H1 (cell line): ENCODE measurements at regions of chr1 and their contacts with region 1.

Region 1: GRCh38 chr1:114075546-114076242 is 78.0 kb downstream of the SYT6 start:
- DNase-seq: peak in 1 of 2 experiments; percentile 29
- H3K4me3 ChIP-seq: peak overlapping the region in 1 of 4 experiments; percentile 13; a peak in 1 of 8 replicates
- H3K27ac ChIP-seq: peak overlapping the region; percentile 63; the same call in 1 of the 2 replicates
- H3K4me1 ChIP-seq: peaks cover 17 to 42% (median 32%) of the 10 kb centered on the region in 4 experiments
- H3K27me3 ChIP-seq: no peaks in the 10 kb centered on the region
- CTCF ChIP-seq: no peak
- EP300 ChIP-seq: no peak
- POLR2A ChIP-seq: no peak
- RAD21 ChIP-seq: no peak

Region 2: GRCh38 chr1:114062477-114063099 is 13.1 kb before region 1 on chr1:
- CTCF ChIA-PET with region 1: interaction called, 10 read pairs
- POLR2A ChIA-PET with region 1: interaction called, 4 read pairs
- DNase-seq: no peak
- H3K4me3 ChIP-seq: no peak overlapping the region
- H3K27ac ChIP-seq: no peak overlapping the region
- H3K4me1 ChIP-seq: no peaks in the 10 kb centered on the region
- H3K27me3 ChIP-seq: no peaks in the 10 kb centered on the region; a peak in 1 of 7 replicates
- CTCF ChIP-seq: no peak
- EP300 ChIP-seq: no peak
- POLR2A ChIP-seq: no peak
- RAD21 ChIP-seq: no peak

Region 3: DNA sequence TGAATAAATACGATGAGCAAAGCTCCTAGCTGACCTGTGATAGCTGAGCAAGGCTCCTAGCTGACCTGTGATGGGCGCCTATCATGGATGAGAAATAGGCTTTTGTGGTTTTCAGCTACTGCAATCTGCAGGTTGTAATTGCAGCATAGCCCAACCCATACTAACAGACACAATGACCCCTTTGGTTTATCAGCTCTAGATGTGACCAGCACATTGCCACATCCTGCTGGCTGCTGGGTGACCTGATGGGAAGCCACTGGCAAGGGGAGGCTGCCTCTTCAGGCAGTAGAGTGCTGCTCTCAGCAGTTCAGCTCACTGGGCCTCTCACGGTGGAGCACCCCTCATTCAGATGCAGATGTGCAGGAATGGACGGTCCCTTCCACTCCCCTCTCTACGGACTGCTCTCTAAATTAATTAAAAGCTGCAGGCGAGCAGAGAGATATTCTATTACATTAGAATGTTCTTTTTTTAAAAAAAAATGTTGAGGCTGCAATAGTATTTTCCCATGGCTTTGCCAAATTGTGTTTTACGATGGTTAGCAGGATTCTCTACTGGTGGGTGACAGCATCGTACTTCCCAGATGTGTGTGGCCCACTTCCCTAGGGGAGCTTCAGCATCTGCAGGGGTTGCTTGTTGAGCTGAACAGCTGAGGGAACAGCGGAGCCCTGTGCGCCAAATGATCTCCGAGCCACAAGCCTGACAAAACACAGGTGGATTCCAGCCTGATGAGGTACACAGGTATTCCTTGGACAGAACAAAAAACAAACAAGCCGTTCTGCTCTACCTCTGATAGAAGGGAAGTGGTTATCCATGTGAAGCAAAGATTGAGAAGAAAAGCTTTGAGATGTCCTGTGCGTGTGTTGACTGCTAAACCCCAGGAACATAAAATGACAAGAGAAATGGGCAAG is 13.0 kb after region 1 on chr1:
- CTCF ChIA-PET with region 1: interaction called, 11 read pairs
- POLR2A ChIA-PET with region 1: interaction called, 8 read pairs
- DNase-seq: no peak
- H3K4me3 ChIP-seq: no peak overlapping the region
- H3K27ac ChIP-seq: 0 out of 2 replicates have a peak overlapping the region, but pooled peaks have one; percentile 17
- H3K4me1 ChIP-seq: peaks cover 7 to 23% (median 11%) of the 10 kb centered on the region in 4 experiments; a peak in 6 of 7 replicates
- H3K27me3 ChIP-seq: no peaks in the 10 kb centered on the region
- CTCF ChIP-seq: peak in 2 of 3 experiments; percentile 1 to 12; a peak in 2 of 4 replicates
- EP300 ChIP-seq: peak in 1 of 2 experiments; percentile 39; a peak in 1 of 3 replicates
- POLR2A ChIP-seq: peak in 1 of 2 experiments; percentile 47; a peak in 1 of 3 replicates
- RAD21 ChIP-seq: peak in 1 of 2 experiments; percentile 34; a peak in 1 of 4 replicates